ENCODE measurements at regions of chr19 and their contacts with region 1.

Region 1: GRCh38 chr19:9584073-9584833 is at the start of gene ZNF121:
- DNase-seq: peak; percentile 85 to 87
- ATAC-seq: peak; percentile 95 to 98 (median 97)
- H3K4me3 ChIP-seq: peak within 1 kb of the TSS; percentile 55 to 91 (median 78)
- H3K27ac ChIP-seq: peak within 1 kb of the TSS; percentile 72 to 95 (median 91)
- H3K4me1 ChIP-seq: peaks cover 0 to 34% (median 20%) of the 10 kb centered on the region in 9 donors
- H3K27me3 ChIP-seq: peaks cover 0 to 12% (median 1%) of the 10 kb centered on the region in 7 donors
- CTCF ChIP-seq: no peak
- total RNA-seq, gene ZNF121: 15.8 to 22.5 (median 19.6) TPM

Region 2: GRCh38 chr19:9205501-9206113 is 378.6 kb before region 1 on chr19:
- intact Hi-C with region 1: loop called in 2 of 10 experiments (anchors 10 kb)
- DNase-seq: peak; percentile 64 to 67
- ATAC-seq: peak in 7 of 8 donors; percentile 58 to 74 (median 69)
- H3K4me3 ChIP-seq: peak overlapping the region in 7 of 10 donors; percentile 27 to 48 (median 42)
- H3K27ac ChIP-seq: no peak overlapping the region
- H3K4me1 ChIP-seq: peaks cover 0 to 4% (median 0%) of the 10 kb centered on the region in 9 donors
- H3K27me3 ChIP-seq: peaks cover 0 to 42% (median 18%) of the 10 kb centered on the region in 7 donors
- CTCF ChIP-seq: peak; percentile 55 to 95 (median 90)

Region 3: GRCh38 chr19:9309139-9309973 is 274.9 kb before region 1 on chr19 and contains the start of gene ZNF699:
- intact Hi-C with region 1: loop called in 2 of 10 experiments (anchors 5 to 10 kb)
- DNase-seq: peak; percentile 98 to 99
- ATAC-seq: peak; percentile 98 to 99 (median 99)
- H3K4me3 ChIP-seq: peak within 1 kb of the TSS; percentile 59 to 96 (median 82)
- H3K27ac ChIP-seq: peak within 1 kb of the TSS; percentile 92 to 98 (median 96)
- H3K4me1 ChIP-seq: peaks cover 0 to 26% (median 12%) of the 10 kb centered on the region in 9 donors
- H3K27me3 ChIP-seq: no peaks in the 10 kb centered on the region
- CTCF ChIP-seq: no peak
- total RNA-seq, gene ZNF699: 2.7 to 6.5 (median 4.2) TPM

Region 4: DNA sequence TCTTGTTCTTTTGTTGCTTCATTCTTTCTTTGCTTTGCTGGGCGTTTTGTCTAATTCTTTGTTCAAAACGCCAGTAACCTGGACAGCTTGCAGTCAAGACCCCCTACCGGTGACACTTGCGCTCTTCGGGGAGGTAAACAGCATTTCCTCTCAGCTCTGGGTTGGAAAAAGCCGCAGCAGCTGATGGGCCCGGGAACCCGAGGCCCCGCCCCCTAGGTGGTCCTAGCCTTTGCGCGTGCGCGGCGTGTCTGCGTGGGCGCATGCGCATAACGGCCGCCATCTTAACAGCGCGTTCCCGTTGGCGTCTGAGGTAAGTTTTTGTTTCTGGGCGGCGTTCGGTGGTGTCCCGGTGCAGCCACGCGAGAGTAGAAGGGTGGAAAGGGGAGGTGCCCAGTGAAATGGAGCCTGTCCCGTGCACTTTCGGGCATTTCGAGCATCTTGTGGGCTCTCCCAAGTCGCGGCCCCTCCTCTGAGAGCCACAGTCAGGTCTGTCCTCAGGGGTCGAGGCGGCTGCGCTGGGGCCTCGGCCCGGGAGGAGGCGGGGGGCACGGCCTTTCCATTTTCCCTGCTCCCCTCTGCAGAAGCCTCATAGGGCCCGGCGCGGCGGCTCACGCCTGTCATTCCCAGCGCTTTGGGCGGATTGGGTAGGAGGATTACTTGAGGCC is 260.2 kb before region 1 on chr19 and contains the start of gene ZNF559:
- intact Hi-C with region 1: loop called in 2 of 10 experiments (anchors 1 to 10 kb)
- DNase-seq: peak; percentile 93 to 96
- ATAC-seq: peak; percentile 96 to 99 (median 98)
- H3K4me3 ChIP-seq: peak within 1 kb of the TSS; percentile 57 to 92 (median 74)
- H3K27ac ChIP-seq: peak within 1 kb of the TSS; percentile 61 to 93 (median 90)
- H3K4me1 ChIP-seq: peaks cover 0 to 22% (median 6%) of the 10 kb centered on the region in 9 donors
- H3K27me3 ChIP-seq: no peaks in the 10 kb centered on the region
- CTCF ChIP-seq: peak in 7 of 9 donors; percentile 8 to 46 (median 26)
- total RNA-seq, gene ZNF559: 9.8 to 21.2 (median 17.5) TPM

Region 5: DNA sequence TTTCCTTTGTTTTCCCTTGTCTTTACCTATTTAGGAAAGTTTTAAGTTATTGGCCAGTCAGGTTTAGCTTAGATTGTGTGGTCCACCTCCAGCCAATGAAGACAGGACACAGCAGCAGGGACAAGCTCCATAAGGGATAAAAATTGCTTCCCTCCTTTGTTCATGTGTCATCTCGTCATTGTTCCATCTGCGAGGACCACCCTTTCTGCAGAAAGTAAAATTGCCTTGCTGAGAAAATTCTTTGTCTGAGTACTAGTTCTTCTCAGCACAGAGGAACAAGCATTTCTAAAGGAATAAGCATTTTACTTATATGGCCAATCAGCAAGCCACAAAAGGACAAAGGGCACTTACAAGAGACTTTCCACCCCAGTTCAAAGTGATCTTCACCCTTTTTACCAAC is 97.2 kb before region 1 on chr19:
- intact Hi-C with region 1: no loop called
- DNase-seq: no peak
- ATAC-seq: no peak
- H3K4me3 ChIP-seq: no peak overlapping the region
- H3K27ac ChIP-seq: no peak overlapping the region
- H3K4me1 ChIP-seq: no peaks in the 10 kb centered on the region
- H3K27me3 ChIP-seq: no peaks in the 10 kb centered on the region
- CTCF ChIP-seq: no peak

Region 6: GRCh38 chr19:9538183-9539058 is 45.8 kb before region 1 on chr19 and contains the start of gene ZNF426:
- intact Hi-C with region 1: loop called in 1 of 10 experiments (anchors 10 kb)
- DNase-seq: peak; percentile 87 to 90
- ATAC-seq: peak; percentile 97 to 99 (median 98)
- H3K4me3 ChIP-seq: peak within 1 kb of the TSS; percentile 59 to 97 (median 80)
- H3K27ac ChIP-seq: peak within 1 kb of the TSS; percentile 92 to 98 (median 95)
- H3K4me1 ChIP-seq: peaks cover 0 to 23% (median 16%) of the 10 kb centered on the region in 9 donors
- H3K27me3 ChIP-seq: no peaks in the 10 kb centered on the region
- CTCF ChIP-seq: peak in 1 of 9 donors; percentile 12
- total RNA-seq, gene ZNF426: 14.7 to 20.2 (median 17.0) TPM

Region 7: GRCh38 chr19:9621156-9622037 is 37.1 kb after region 1 on chr19 and contains the start of gene ZNF561:
- intact Hi-C with region 1: loop called in 3 of 10 experiments (anchors 2 to 5 kb)
- DNase-seq: peak; percentile 87 to 89
- ATAC-seq: peak; percentile 93 to 97 (median 96)
- H3K4me3 ChIP-seq: peak within 1 kb of the TSS; percentile 41 to 97 (median 84)
- H3K27ac ChIP-seq: peak within 1 kb of the TSS; percentile 79 to 98 (median 94)
- H3K4me1 ChIP-seq: peaks cover 3 to 40% (median 23%) of the 10 kb centered on the region in 9 donors
- H3K27me3 ChIP-seq: no peaks in the 10 kb centered on the region
- CTCF ChIP-seq: no peak
- total RNA-seq, gene ZNF561: 19.1 to 26.6 (median 23.7) TPM